ENCODE measurements at regions of chr12 and their contacts with region 1.

Region 1: GRCh38 chr12:91382081-91382543 is 199.5 kb upstream of the DCN start:
- DNase-seq: peak; percentile 22
- H3K4me3 ChIP-seq: peak overlapping the region; percentile 52 to 63
- H3K27ac ChIP-seq: peak overlapping the region; percentile 69 to 100
- H3K4me1 ChIP-seq: peaks cover 5 to 23% of the 10 kb centered on the region in 2 experiments; a peak in 3 of 4 replicates
- H3K27me3 ChIP-seq: no peaks in the 10 kb centered on the region
- CTCF ChIP-seq: peak; percentile 95
- EP300 ChIP-seq: no peak
- RAD21 ChIP-seq: peak; percentile 97

Region 2: GRCh38 chr12:91361864-91362263 is 20.2 kb before region 1 on chr12:
- CTCF ChIA-PET with region 1: interaction called, 18 read pairs
- POLR2A ChIA-PET with region 1: no interaction called
- DNase-seq: no peak
- H3K4me3 ChIP-seq: peak overlapping the region in 1 of 2 experiments; percentile 15; a peak in 1 of 4 replicates
- H3K27ac ChIP-seq: no peak overlapping the region
- H3K4me1 ChIP-seq: peaks cover 0 to 3% of the 10 kb centered on the region in 2 experiments; a peak in 1 of 4 replicates
- H3K27me3 ChIP-seq: no peaks in the 10 kb centered on the region
- CTCF ChIP-seq: peak; percentile 71
- EP300 ChIP-seq: no peak
- RAD21 ChIP-seq: peak; percentile 83

Region 3: DNA sequence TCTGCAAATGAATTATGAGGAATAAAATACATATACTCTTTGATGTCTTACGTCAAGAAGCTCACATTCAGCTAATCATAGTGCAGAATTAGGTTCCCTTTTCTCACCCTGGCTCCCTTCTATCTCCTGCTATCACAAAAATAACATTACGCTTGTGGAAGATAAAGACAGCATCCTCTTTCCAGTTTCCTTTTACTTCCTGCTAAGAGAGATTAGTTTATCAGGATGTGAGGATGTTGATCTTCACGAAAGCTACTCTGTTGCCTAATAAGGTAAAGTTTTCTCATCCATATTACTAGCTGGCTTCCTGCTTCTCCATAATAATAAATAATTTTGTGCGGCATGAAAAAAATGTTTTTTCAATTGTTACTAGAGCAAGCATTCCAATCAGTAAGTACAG is 18.2 kb after region 1 on chr12:
- CTCF ChIA-PET with region 1: interaction called, 25 read pairs
- POLR2A ChIA-PET with region 1: no interaction called
- DNase-seq: no peak
- H3K4me3 ChIP-seq: no peak overlapping the region
- H3K27ac ChIP-seq: no peak overlapping the region; a peak in 1 of 4 replicates
- H3K4me1 ChIP-seq: no peaks in the 10 kb centered on the region; a peak in 1 of 4 replicates
- H3K27me3 ChIP-seq: no peaks in the 10 kb centered on the region
- CTCF ChIP-seq: no peak
- EP300 ChIP-seq: no peak
- RAD21 ChIP-seq: no peak

Region 4: DNA sequence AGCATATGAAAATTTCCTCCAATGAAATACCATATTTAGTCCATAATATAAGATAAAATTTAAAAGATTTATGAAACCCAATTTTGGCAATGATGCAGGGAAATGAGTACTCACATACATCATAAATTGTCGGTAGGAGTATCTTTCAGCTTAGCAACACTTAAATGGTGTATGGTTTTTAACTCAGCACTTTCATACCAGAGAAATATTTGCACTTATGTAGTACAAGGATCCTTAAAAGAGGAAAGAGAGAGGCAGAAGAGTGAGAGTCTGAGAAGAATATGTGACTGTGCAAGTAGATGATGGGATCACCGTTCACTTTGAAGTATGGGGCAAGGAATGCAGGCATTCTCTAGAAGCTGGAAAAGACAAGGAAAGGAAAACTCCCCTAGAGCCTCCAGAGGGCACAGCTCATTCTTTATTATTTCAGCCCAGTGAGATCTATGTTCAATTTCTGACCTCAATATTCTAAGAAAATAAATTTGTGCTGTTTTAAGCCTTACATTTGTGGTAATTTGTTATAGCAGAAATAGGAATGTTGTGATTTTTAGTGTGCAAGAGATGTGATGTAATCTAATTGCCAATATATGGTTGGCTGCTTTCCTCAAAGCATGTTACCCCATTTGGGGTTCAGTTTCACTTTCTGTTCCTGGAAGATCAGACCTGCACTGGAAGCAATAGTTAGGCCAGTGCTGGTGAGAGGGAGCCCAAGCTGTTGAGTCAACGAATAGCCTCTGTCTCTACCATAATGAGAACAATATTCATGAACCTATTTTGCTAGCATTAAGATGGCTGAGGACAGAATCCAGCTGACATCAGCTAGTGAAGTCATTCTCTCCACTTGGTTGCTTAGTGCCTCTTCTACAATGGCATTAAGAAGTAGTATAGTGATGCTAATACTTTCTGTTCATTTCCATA is 180.1 kb after region 1 on chr12:
- CTCF ChIA-PET with region 1: interaction called, 11 read pairs
- POLR2A ChIA-PET with region 1: interaction called, 3 read pairs
- DNase-seq: no peak
- H3K4me3 ChIP-seq: peak overlapping the region in 1 of 2 experiments; percentile 36; a peak in 1 of 4 replicates
- H3K27ac ChIP-seq: no peak overlapping the region
- H3K4me1 ChIP-seq: peaks cover 0 to 2% of the 10 kb centered on the region in 2 experiments; a peak in 1 of 4 replicates
- H3K27me3 ChIP-seq: no peaks in the 10 kb centered on the region
- CTCF ChIP-seq: no peak
- EP300 ChIP-seq: no peak
- RAD21 ChIP-seq: no peak

Region 5: DNA sequence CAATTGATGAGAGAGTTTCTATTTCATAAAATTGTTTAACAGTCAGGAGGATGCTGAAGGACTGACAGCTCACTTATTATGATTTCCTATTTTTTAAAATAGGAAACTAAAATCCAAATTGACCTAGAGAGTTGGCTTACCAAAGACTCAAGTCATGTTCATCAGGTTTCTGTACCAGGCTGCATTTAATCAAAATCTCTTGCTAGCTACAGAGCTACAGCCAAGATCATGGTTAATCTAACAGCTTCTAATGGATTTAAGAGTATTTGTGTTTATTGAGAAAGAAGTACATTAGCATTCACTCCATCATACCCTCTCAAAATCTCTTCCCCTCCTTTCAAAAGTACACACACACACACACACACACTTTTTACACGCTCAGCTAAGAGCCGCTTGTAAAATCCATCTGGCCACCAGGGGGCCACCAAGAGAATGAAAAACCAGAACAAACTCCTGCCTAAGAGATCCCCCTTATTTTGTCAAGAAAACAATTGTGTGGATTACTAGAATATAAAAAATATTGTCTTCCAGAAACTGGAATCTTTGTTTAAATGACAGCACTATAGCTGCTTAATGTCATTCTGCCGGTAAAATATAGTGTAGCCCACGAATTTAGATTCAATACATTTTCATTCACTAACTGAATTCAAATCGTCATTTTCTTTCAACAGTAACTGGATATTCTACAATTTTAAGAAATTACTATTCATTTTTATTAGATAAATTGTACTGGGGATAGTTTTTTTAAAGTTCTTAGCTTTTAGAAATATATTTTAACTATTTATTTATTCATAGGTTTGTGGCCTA is 429.6 kb after region 1 on chr12:
- CTCF ChIA-PET with region 1: interaction called, 14 read pairs
- POLR2A ChIA-PET with region 1: no interaction called
- DNase-seq: peak; percentile 22
- H3K4me3 ChIP-seq: peak overlapping the region in 1 of 2 experiments; percentile 24; a peak in 1 of 4 replicates
- H3K27ac ChIP-seq: no peak overlapping the region
- H3K4me1 ChIP-seq: no peaks in the 10 kb centered on the region; a peak in 1 of 4 replicates
- H3K27me3 ChIP-seq: no peaks in the 10 kb centered on the region
- CTCF ChIP-seq: peak; percentile 96
- EP300 ChIP-seq: no peak
- RAD21 ChIP-seq: peak; percentile 72

Region 6: DNA sequence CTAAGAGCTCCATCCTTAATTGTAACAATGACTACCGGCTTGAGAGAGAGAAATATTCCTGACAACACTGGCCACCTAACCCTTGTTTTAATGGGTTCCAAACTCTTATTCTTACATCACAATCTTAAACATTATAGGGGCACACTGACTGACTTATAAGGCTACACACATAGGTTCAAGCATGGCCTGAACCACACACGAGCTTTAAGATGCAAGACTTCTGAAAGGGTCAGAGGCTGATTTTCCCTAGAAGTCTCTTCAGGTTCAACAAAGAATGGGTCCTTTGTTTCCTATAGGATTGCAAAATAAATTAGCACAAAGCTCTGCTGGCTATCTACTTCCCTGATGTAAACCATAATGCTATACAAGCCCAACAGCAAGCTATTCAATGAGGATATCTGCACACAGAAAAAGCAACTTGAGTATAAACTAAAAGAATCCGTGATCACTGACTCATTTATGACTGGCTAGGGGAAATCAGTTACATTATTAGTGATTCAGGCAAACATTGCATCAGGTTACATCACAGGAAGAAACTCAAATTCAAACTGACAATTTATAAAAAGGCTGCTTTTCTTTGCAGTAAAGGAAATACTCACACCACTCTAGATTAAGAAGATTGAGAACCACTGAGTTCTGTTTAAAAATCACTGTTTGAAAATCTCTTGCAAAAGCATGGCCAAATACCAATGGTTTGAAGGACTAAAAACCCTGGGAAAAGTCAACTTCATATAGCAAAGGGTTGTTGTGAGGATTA is 755.0 kb after region 1 on chr12:
- CTCF ChIA-PET with region 1: interaction called, 50 read pairs
- POLR2A ChIA-PET with region 1: interaction called, 3 read pairs
- DNase-seq: no peak
- H3K4me3 ChIP-seq: peak overlapping the region; percentile 25 to 31; a peak in 2 of 4 replicates
- H3K27ac ChIP-seq: peak overlapping the region; percentile 78 to 91
- H3K4me1 ChIP-seq: peaks cover 27 to 64% of the 10 kb centered on the region in 2 experiments
- H3K27me3 ChIP-seq: no peaks in the 10 kb centered on the region
- CTCF ChIP-seq: no peak
- EP300 ChIP-seq: peak in 1 of 2 experiments; percentile 95; a peak in 2 of 4 replicates
- RAD21 ChIP-seq: no peak

Region 7: GRCh38 chr12:92570056-92570753 is 1188.1 kb after region 1 on chr12:
- CTCF ChIA-PET with region 1: interaction called, 92 read pairs
- POLR2A ChIA-PET with region 1: interaction called, 6 read pairs
- DNase-seq: peak; percentile 49
- H3K4me3 ChIP-seq: no peak overlapping the region; a peak in 1 of 4 replicates
- H3K27ac ChIP-seq: peak overlapping the region in 1 of 2 experiments; percentile 60; a peak in 2 of 4 replicates
- H3K4me1 ChIP-seq: no peaks in the 10 kb centered on the region; a peak in 2 of 4 replicates
- H3K27me3 ChIP-seq: no peaks in the 10 kb centered on the region
- CTCF ChIP-seq: peak; percentile 86
- EP300 ChIP-seq: no peak
- RAD21 ChIP-seq: peak; percentile 94

Measured in SK-N-SH (cell line).